Panc1 (cell line): ENCODE measurements at regions of chr2 and their contacts with region 1.

Region 1: GRCh38 chr2:112626604-112627059 is 19.1 kb upstream of the SLC20A1 start:
- DNase-seq: peak; percentile 73
- ATAC-seq: peak; percentile 79
- H3K4me3 ChIP-seq: peak overlapping the region; percentile 13 to 44; a peak in 3 of 4 replicates
- H3K27ac ChIP-seq: peak overlapping the region; percentile 62; the same call in 1 of the 2 replicates
- H3K4me1 ChIP-seq: peaks cover 21% of the 10 kb centered on the region
- H3K27me3 ChIP-seq: no peaks in the 10 kb centered on the region
- CTCF ChIP-seq: peak; percentile 98

Region 2: GRCh38 chr2:112614201-112614840 is 12.3 kb before region 1 on chr2:
- CTCF ChIA-PET with region 1: interaction called, 11 read pairs
- POLR2A ChIA-PET with region 1: no interaction called
- in situ Hi-C with region 1: no loop called
- intact Hi-C with region 1: no loop called
- DNase-seq: no peak
- ATAC-seq: no peak
- H3K4me3 ChIP-seq: no peak overlapping the region
- H3K27ac ChIP-seq: no peak overlapping the region
- H3K4me1 ChIP-seq: no peaks in the 10 kb centered on the region
- H3K27me3 ChIP-seq: no peaks in the 10 kb centered on the region
- CTCF ChIP-seq: no peak

Region 3: DNA sequence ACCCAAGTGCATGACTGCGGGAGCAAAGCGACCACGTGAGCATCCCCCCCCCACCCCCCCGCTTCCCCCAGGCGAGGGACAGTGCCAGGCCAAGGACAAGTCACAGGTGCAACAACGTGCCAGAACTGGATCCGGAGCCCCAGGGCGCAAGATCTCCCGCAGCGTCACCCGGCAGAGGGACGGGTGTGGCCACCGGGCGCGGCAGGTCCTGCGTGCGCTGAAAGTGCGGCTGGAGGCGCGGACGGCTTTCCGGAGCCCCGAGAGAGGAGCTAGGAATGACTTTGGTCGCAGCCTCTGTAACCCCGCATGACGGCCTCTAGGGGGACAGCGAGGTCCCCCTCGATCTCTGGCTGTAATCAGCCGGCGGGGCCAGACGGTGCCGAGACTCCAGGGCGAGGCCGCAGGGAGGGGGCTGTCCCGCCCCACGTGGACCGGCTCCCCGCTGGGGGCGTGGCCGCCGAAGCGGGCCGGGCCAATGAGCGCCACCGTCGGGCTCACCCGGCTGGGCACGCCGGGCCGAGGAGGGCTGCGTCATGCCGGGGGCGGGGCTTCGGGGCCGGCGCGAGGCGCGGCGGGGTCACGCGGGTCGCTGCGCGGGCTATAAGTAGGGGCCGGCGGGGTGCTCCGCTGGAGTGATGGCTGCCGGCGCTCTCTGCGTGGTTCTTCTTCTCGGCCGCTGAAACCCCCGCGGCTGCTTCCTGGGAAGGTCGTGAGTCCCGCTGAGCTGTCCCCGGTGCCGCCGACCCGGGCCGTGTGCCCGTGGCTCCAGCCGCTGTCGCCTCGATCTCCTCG is 18.9 kb after region 1 on chr2 and contains the start of gene SLC20A1:
- CTCF ChIA-PET with region 1: interaction called, 6 read pairs
- POLR2A ChIA-PET with region 1: interaction called, 15 read pairs
- in situ Hi-C with region 1: no loop called
- intact Hi-C with region 1: no loop called
- DNase-seq: peak; percentile 66
- ATAC-seq: peak; percentile 95
- H3K4me3 ChIP-seq: peak within 1 kb of the TSS; percentile 70 to 86
- H3K27ac ChIP-seq: peak within 1 kb of the TSS; percentile 94
- H3K4me1 ChIP-seq: peaks cover 42% of the 10 kb centered on the region
- H3K27me3 ChIP-seq: no peaks in the 10 kb centered on the region
- CTCF ChIP-seq: peak; percentile 35
- total RNA-seq, gene SLC20A1: 72.0 TPM

Region 4: DNA sequence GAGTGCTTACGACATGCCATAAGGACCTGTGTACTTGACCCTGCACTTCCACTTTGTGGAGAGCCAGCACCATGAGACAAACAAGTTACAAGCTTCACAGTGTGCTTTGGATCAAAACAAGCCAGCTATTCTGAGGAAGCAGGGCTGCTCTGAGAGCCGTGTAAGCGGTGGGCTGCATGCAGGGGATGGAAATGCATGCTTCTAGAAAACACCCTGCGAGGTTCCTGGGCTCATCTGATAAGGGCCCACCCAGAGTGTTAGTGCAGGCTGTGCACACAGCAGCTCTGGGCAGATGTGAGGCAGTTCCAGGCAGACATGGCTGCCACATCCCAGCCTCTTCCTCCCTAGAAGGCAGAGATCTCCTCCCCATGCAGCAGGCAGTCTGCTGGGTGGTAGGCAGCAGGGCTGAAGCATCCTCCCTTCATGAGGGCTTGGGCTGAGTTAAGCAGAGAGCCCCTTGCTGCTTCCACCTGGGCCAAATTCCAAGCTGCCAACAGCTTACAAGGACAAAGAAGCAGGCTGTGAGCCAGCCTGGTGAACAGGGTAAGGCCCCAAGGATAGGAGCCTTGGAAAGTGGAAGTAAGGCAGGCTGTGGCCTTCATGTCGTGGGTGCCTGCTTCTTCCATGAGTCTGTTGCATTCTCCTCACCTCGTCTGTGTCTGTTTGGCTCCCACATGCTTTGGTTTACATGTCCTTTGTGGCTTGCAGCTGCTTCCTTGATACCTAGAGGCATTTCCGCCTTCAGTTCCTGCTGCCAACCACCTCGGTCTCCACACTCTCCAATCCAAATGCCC is 554.8 kb after region 1 on chr2:
- CTCF ChIA-PET with region 1: no interaction called
- POLR2A ChIA-PET with region 1: no interaction called
- in situ Hi-C with region 1: no loop called
- intact Hi-C with region 1: no loop called
- DNase-seq: no peak
- ATAC-seq: no peak
- H3K4me3 ChIP-seq: no peak overlapping the region
- H3K27ac ChIP-seq: no peak overlapping the region
- H3K4me1 ChIP-seq: no peaks in the 10 kb centered on the region
- H3K27me3 ChIP-seq: no peaks in the 10 kb centered on the region
- CTCF ChIP-seq: no peak